ENCODE measurements at regions of chr6 and their contacts with region 1.

Region 1: GRCh38 chr6:166382933-166383801 is at the start of gene MPC1:
- DNase-seq: peak; percentile 97 to 98 (median 97)
- ATAC-seq: peak; percentile 87 to 98 (median 96)
- H3K4me3 ChIP-seq: peak within 1 kb of the TSS; percentile 63 to 97 (median 93)
- H3K27ac ChIP-seq: peak within 1 kb of the TSS; percentile 93 to 98 (median 96)
- H3K4me1 ChIP-seq: peaks cover under 1 to 35% (median 21%) of the 10 kb centered on the region in 12 donors
- H3K27me3 ChIP-seq: no peaks in the 10 kb centered on the region
- CTCF ChIP-seq: peak in 1 of 12 donors; percentile 5
- POLR2A ChIP-seq: peak in 1 of 2 donors; percentile 91
- total RNA-seq, gene MPC1: 213 to 796 (median 542) TPM

Region 2: DNA sequence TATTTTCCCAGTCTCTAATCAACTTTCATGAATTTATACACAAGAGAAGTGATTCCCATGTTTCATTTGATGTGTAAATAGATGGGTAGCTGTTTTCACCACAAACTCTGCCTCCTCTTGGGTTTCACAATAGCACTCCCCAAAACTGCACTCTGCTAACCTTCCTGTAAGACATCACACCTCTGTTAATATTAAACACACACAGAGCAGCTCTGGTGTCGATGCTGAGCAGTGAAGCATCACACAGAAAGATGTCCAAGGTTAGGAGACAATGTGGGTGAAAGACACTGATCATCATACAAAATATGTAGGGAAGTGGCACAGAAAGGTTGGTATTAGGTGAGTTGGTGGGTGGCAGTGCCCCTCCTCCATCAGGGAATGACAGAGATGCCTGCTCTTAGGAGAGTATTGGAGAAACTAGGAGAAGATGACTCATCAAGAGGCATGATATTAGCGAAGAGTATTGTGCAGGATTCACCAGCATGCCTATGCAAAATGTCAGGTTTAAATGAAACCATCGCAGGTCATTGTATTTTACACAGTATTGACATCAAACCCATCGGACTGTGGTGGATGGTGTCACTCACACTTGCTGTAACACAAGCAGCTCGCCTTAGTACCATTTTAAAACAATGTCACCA is 415.3 kb before region 1 on chr6:
- intact Hi-C with region 1: no loop called
- DNase-seq: no peak
- ATAC-seq: no peak
- H3K4me3 ChIP-seq: no peak overlapping the region
- H3K27ac ChIP-seq: no peak overlapping the region
- H3K4me1 ChIP-seq: no peaks in the 10 kb centered on the region
- H3K27me3 ChIP-seq: peaks cover 0 to 2% (median 0%) of the 10 kb centered on the region in 9 donors
- CTCF ChIP-seq: no peak
- POLR2A ChIP-seq: no peak

Region 3: DNA sequence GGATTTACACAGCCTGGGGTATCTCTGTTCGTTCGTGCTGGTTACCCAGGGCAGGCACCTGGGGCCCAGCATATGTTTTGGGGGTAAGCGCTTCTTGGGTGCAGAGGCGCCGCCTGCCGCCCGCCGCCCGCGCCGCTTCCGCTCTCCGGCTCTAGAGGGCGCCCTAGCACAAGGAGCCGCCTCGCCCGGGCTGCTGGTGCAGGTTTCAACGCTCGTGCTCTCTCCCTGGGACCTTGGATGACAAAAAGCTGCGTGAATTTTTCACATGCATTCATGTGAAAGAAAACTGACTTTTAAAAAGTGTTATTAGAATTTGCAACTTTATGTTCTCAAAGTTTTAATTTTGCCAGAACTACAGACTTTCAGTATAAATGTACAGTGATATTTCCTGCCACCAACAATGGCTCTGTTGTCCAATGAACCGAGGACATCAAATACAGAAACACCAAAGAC is 107.4 kb before region 1 on chr6:
- intact Hi-C with region 1: loop called in 1 of 10 experiments (anchors 5 kb)
- DNase-seq: peak; percentile 51 to 89 (median 65)
- ATAC-seq: peak in 3 of 4 donors; percentile 76 to 85 (median 84)
- H3K4me3 ChIP-seq: no peak overlapping the region
- H3K27ac ChIP-seq: no peak overlapping the region
- H3K4me1 ChIP-seq: peaks cover 0 to 6% (median 0%) of the 10 kb centered on the region in 12 donors
- H3K27me3 ChIP-seq: peaks cover 0 to 14% (median 4%) of the 10 kb centered on the region in 9 donors
- CTCF ChIP-seq: peak; percentile 95 to 100 (median 99)
- POLR2A ChIP-seq: no peak

Region 4: GRCh38 chr6:166313255-166314070 is 69.7 kb before region 1 on chr6:
- intact Hi-C with region 1: loop called in 3 of 10 experiments (anchors 5 kb)
- DNase-seq: no peak
- ATAC-seq: peak in 3 of 4 donors; percentile 59 to 94 (median 86)
- H3K4me3 ChIP-seq: no peak overlapping the region
- H3K27ac ChIP-seq: no peak overlapping the region
- H3K4me1 ChIP-seq: peaks cover 0 to 3% (median under 1%) of the 10 kb centered on the region in 12 donors
- H3K27me3 ChIP-seq: peaks cover 0 to 17% (median 9%) of the 10 kb centered on the region in 9 donors
- CTCF ChIP-seq: peak; percentile 50 to 85 (median 68)
- POLR2A ChIP-seq: no peak

Region 5: DNA sequence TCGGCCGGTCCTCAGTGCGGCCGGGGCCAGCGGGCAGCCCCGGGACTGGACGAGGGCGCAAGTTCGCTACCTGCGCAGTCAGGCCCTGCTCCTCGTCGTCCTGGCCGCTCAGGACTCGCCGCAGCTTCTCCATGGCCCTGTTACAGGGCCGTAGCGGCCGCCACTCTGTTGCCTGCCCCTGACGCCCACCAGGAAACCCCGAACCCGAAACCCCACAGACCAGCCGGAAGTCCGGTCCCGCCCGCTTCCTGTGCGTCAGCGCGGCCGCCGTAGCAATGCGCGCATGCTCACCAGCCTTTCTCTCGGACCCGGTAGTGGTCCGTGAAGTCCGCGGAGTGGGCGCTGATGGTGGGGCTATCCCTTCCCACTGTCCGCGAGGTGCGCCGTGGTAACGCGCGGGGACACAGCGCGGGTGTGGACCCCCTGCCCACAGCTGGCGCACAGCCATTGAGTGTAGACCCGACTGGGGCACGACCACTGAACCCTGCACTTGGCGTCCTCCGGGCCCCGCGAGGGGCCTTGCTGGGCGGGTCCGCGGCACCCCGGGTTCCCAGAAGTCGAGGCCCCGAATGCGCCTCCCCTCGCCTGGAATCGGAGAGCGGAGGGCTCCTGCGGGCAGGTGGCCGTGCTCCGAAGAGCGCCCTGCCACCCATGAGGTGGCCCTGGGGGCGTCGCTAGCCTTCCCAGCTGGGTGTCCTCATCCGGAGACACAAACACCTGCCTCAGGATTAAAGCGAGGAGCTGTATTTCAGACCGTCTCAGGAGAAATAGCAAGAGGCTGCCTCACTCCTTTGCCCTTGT is 40.6 kb before region 1 on chr6 and contains the start of gene SFT2D1:
- intact Hi-C with region 1: loop called in 8 of 10 experiments (anchors 1 to 5 kb)
- DNase-seq: peak; percentile 90 to 95 (median 92)
- ATAC-seq: peak; percentile 93 to 99 (median 98)
- H3K4me3 ChIP-seq: peak within 1 kb of the TSS; percentile 67 to 99 (median 96)
- H3K27ac ChIP-seq: peak within 1 kb of the TSS; percentile 54 to 99 (median 91)
- H3K4me1 ChIP-seq: peaks cover 0 to 54% (median 33%) of the 10 kb centered on the region in 12 donors
- H3K27me3 ChIP-seq: no peaks in the 10 kb centered on the region
- CTCF ChIP-seq: no peak
- POLR2A ChIP-seq: peak; percentile 51 to 88
- total RNA-seq, gene SFT2D1: 16.8 to 30.8 (median 20.9) TPM

Region 6: DNA sequence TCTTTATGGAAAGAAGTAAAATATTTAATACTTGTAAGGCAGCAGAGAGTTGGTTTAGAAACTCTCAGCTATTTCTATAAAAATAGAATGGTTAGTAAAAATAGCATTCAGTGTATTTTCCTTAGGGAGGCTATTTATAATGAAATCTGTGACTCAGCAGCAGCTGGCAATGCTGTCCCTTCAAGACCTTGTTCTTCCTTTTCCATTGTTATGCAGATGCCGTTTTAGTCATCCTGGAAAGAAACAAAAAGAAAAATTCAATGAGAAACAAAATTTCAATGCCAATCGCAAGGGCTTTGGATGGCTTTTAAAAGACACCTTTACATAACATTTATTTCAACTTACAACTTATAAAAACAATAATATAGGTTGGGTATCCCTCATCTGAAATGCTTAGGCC is 17.9 kb before region 1 on chr6:
- intact Hi-C with region 1: loop called in 2 of 10 experiments (anchors 2 kb)
- DNase-seq: peak in 2 of 5 donors; percentile 39 to 46
- ATAC-seq: peak; percentile 41 to 74 (median 66)
- H3K4me3 ChIP-seq: peak overlapping the region in 4 of 12 donors; percentile 4 to 27 (median 14)
- H3K27ac ChIP-seq: peak overlapping the region; percentile 56 to 93 (median 79)
- H3K4me1 ChIP-seq: peaks cover 3 to 79% (median 53%) of the 10 kb centered on the region in 12 donors
- H3K27me3 ChIP-seq: no peaks in the 10 kb centered on the region
- CTCF ChIP-seq: no peak
- POLR2A ChIP-seq: no peak

Region 7: GRCh38 chr6:166402582-166403277 is 19.6 kb after region 1 on chr6:
- intact Hi-C with region 1: no loop called
- DNase-seq: no peak
- ATAC-seq: no peak
- H3K4me3 ChIP-seq: no peak overlapping the region
- H3K27ac ChIP-seq: no peak overlapping the region
- H3K4me1 ChIP-seq: no peaks in the 10 kb centered on the region
- H3K27me3 ChIP-seq: peaks cover 0 to 6% (median 0%) of the 10 kb centered on the region in 9 donors
- CTCF ChIP-seq: no peak
- POLR2A ChIP-seq: no peak

Region 8: GRCh38 chr6:166999145-166999883 is 616.1 kb after region 1 on chr6 and contains the start of gene CEP43:
- intact Hi-C with region 1: loop called in 1 of 10 experiments (anchors 5 kb)
- DNase-seq: peak; percentile 96 to 97 (median 96)
- ATAC-seq: peak; percentile 98 to 99 (median 99)
- H3K4me3 ChIP-seq: peak within 1 kb of the TSS; percentile 64 to 99 (median 94)
- H3K27ac ChIP-seq: peak within 1 kb of the TSS in 11 of 12 donors; percentile 17 to 84 (median 74)
- H3K4me1 ChIP-seq: peaks cover 0 to 26% (median 14%) of the 10 kb centered on the region in 12 donors
- H3K27me3 ChIP-seq: no peaks in the 10 kb centered on the region
- CTCF ChIP-seq: peak in 6 of 12 donors; percentile 11 to 37 (median 20)
- POLR2A ChIP-seq: peak in 1 of 2 donors; percentile 39
- total RNA-seq, gene CEP43: 6.6 to 15.5 (median 10.7) TPM